ENCODE measurements at regions of chr3 and their contacts with region 1.

Region 1: DNA sequence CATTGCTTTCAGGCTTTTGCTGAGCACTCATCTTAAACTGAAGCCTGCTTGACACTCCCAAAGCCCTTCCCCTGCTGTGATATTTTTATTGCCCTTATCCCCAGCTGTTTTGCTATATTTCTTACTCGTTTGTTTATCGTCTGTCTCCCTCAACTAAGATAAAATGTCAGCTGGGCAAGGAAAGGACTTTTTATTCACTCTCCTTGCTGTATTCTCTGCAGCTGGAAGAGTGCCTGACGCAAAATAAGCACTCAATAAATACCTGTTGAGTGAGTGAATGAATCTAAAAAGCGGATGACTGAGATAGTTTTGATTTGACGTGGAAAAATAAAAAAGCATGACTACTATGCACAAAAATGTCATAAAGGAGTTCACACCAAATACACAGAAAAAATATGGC is 84.8 kb upstream of the POMGNT2 start:
- DNase-seq: no peak
- ATAC-seq: no peak
- H3K4me3 ChIP-seq: no peak overlapping the region
- H3K4me3 Mint-ChIP-seq: no peak overlapping the region
- H3K27ac ChIP-seq: no peak overlapping the region
- H3K27ac Mint-ChIP-seq: peak overlapping the region in 4 of 9 donors; percentile 1 to 66 (median 34)
- H3K4me1 ChIP-seq: peaks cover 32 to 46% of the 10 kb centered on the region in 2 donors
- H3K4me1 Mint-ChIP-seq: peaks cover 25 to 70% (median 58%) of the 10 kb centered on the region in 7 donors
- H3K27me3 ChIP-seq: no peaks in the 10 kb centered on the region
- H3K27me3 Mint-ChIP-seq: peaks cover 0 to 30% (median 0%) of the 10 kb centered on the region in 5 donors

Region 2: DNA sequence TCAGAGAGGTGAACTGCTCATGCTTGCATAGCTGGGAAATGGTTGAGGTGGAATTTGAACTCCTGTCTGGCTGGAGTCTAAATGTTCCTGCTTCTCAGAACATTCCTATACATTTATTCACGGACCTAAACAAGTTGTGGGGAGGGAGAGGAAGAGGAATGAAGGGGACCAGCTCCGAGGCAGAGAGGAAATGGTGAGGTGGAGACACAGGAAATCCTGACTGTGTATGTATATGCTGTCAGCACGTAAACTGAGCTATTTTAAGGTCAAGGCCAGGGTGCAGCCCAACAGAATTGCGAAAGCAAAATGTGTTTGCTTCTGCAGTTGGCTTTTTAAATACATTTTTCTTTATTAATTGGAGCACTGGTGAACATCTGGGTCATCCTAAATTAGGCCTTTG is 10.6 kb before region 1 on chr3:
- CTCF ChIA-PET with region 1: interaction called, 4 read pairs
- POLR2A ChIA-PET with region 1: interaction called, 62 read pairs
- intact Hi-C with region 1: loop called (anchors 1 kb)
- DNase-seq: peak in 7 of 9 donors; percentile 38 to 66 (median 61)
- ATAC-seq: peak; percentile 86
- H3K4me3 ChIP-seq: peak overlapping the region; percentile 37
- H3K4me3 Mint-ChIP-seq: peak overlapping the region; percentile 66 to 82 (median 79)
- H3K27ac ChIP-seq: peak overlapping the region; percentile 50
- H3K27ac Mint-ChIP-seq: peak overlapping the region; percentile 82 to 97 (median 93)
- H3K4me1 ChIP-seq: peaks cover 32 to 41% of the 10 kb centered on the region in 2 donors
- H3K4me1 Mint-ChIP-seq: peaks cover 47 to 76% (median 71%) of the 10 kb centered on the region in 7 donors
- H3K27me3 ChIP-seq: no peaks in the 10 kb centered on the region
- H3K27me3 Mint-ChIP-seq: no peaks in the 10 kb centered on the region

Region 3: GRCh38 chr3:43215663-43216275 is 25.1 kb after region 1 on chr3:
- CTCF ChIA-PET with region 1: no interaction called
- POLR2A ChIA-PET with region 1: interaction called, 5 read pairs
- intact Hi-C with region 1: loop called in 1 of 2 experiments (anchors 1 kb)
- DNase-seq: peak in 2 of 9 donors; percentile 24 to 31
- ATAC-seq: no peak
- H3K4me3 ChIP-seq: no peak overlapping the region
- H3K4me3 Mint-ChIP-seq: peak overlapping the region in 7 of 10 donors; percentile 34 to 71 (median 59)
- H3K27ac ChIP-seq: no peak overlapping the region
- H3K27ac Mint-ChIP-seq: peak overlapping the region in 8 of 9 donors; percentile 63 to 91 (median 79)
- H3K4me1 ChIP-seq: peaks cover 0 to 43% of the 10 kb centered on the region in 2 donors
- H3K4me1 Mint-ChIP-seq: peaks cover 22 to 64% (median 58%) of the 10 kb centered on the region in 7 donors
- H3K27me3 ChIP-seq: no peaks in the 10 kb centered on the region
- H3K27me3 Mint-ChIP-seq: peaks cover 0 to 10% (median 0%) of the 10 kb centered on the region in 5 donors

Region 4: DNA sequence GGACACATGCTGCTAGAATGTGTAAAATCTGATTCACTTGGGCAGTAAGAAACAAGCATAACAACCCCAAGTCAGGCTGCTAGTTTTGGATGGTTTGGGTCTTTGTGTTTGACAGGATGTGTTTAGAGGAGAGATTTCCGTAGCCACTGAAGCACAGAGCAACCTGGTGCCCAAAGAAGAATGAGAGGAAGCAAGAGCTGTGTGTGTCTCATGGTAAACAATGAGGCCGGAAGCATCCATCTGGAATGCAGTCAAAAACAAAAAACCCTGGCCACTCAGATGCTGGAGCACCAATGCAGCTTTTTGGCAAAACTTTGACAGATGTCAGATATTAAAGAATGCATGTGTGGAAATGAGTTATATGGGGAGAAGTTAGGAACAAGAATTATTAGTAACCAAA is 56.3 kb after region 1 on chr3:
- CTCF ChIA-PET with region 1: no interaction called
- POLR2A ChIA-PET with region 1: interaction called, 3 read pairs
- intact Hi-C with region 1: loop called in 1 of 2 experiments (anchors 2 kb)
- DNase-seq: peak in 6 of 9 donors; percentile 33 to 62 (median 50)
- ATAC-seq: peak; percentile 66
- H3K4me3 ChIP-seq: no peak overlapping the region
- H3K4me3 Mint-ChIP-seq: peak overlapping the region; percentile 8 to 78 (median 61)
- H3K27ac ChIP-seq: peak overlapping the region; percentile 53
- H3K27ac Mint-ChIP-seq: peak overlapping the region; percentile 49 to 90 (median 80)
- H3K4me1 ChIP-seq: peaks cover 9 to 53% of the 10 kb centered on the region in 2 donors
- H3K4me1 Mint-ChIP-seq: peaks cover 35 to 69% (median 65%) of the 10 kb centered on the region in 7 donors
- H3K27me3 ChIP-seq: no peaks in the 10 kb centered on the region
- H3K27me3 Mint-ChIP-seq: peaks cover 0 to 4% (median 0%) of the 10 kb centered on the region in 5 donors